ENCODE measurements at regions of chr2 and their contacts with region 1.

Region 1: GRCh38 chr2:216388046-216388884 is 16.0 kb upstream of the MARCHF4 start:
- DNase-seq: peak in 3 of 9 experiments; percentile 27 to 55 (median 47)
- ATAC-seq: peak; percentile 95
- H3K4me3 ChIP-seq: no peak overlapping the region
- H3K4me3 Mint-ChIP-seq: no peak overlapping the region
- H3K27ac ChIP-seq: no peak overlapping the region
- H3K27ac Mint-ChIP-seq: peak overlapping the region; percentile 7
- H3K4me1 ChIP-seq: peaks cover 15% of the 10 kb centered on the region
- H3K4me1 Mint-ChIP-seq: peaks cover 14% of the 10 kb centered on the region
- H3K27me3 ChIP-seq: peaks cover 0 to 2% of the 10 kb centered on the region in 2 experiments
- H3K27me3 Mint-ChIP-seq: no peaks in the 10 kb centered on the region
- CTCF ChIP-seq: no peak

Region 2: DNA sequence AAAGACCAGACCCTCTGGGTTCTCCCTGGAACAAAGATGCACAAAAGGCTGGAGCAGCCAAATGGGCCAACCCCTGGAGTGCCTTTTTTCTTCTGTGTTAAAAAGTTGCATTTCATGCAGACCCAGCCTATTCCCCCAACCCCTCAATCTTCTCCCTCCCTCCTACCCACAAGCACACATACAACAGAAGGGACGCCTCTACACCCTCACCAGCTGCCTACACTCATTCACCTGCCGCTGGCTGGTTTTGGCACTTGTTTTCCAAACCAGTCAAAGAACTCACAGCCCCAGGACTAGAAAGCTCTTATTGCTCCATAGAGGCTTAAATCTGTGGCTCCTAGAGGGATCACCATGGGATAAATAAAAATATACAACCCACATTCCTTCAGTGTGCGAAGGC is 32.5 kb before region 1 on chr2:
- CTCF ChIA-PET with region 1: no interaction called
- POLR2A ChIA-PET with region 1: no interaction called
- intact Hi-C with region 1: loop called in 1 of 2 experiments (anchors 1 kb)
- DNase-seq: no peak
- ATAC-seq: no peak
- H3K4me3 ChIP-seq: no peak overlapping the region
- H3K4me3 Mint-ChIP-seq: no peak overlapping the region
- H3K27ac ChIP-seq: no peak overlapping the region
- H3K27ac Mint-ChIP-seq: no peak overlapping the region
- H3K4me1 ChIP-seq: peaks cover 43% of the 10 kb centered on the region
- H3K4me1 Mint-ChIP-seq: peaks cover 44% of the 10 kb centered on the region
- H3K27me3 ChIP-seq: no peaks in the 10 kb centered on the region
- H3K27me3 Mint-ChIP-seq: no peaks in the 10 kb centered on the region
- CTCF ChIP-seq: no peak